Left cardiac atrium (tissue), 4 donors: ENCODE measurements at regions of chr2 and their contacts with region 1.

Region 1: DNA sequence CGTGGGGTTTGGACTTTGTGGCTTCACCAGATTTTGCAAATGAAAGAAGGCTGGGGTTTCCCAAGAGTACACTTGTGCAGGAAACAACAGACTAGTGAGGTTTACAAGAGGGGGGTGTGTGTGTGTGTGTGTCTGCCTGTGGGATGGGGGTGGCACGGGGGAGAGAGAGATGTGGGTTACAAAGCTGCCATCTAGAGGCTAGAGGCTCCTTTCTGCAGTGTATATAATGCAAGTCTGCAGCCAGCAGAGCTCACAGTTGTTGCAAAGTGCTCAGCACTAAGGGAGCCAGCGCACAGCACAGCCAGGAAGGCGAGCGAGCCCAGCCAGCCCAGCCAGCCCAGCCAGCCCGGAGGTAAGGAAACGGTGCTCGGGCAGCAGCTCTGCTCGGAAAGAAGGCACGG is at the start of gene ACKR3:
- DNase-seq: peak; percentile 80
- ATAC-seq: peak; percentile 68 to 79
- total RNA-seq, gene ACKR3: 27.4 to 46.4 TPM

Region 2: DNA sequence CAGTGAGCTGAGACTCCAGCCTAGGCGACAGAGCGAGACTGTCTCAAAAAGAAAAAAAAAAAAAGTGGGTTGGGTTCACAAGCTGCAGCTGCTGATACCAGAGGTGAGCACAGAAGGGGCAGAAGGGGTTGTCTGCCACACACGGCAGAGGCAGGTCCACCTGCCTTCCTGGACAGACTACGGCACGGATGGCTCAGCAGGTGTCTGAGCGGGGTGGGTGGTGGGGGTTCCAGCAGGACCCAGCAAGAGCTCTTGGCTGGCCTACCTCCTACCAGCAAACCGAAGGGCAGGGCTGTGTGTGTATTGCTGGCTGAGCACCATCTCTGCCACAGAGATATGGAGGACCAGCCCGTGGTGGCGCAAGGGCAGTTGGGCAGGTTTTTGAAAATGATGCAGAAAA is 175.0 kb before region 1 on chr2:
- intact Hi-C with region 1: no loop called
- DNase-seq: no peak
- ATAC-seq: no peak

Region 3: DNA sequence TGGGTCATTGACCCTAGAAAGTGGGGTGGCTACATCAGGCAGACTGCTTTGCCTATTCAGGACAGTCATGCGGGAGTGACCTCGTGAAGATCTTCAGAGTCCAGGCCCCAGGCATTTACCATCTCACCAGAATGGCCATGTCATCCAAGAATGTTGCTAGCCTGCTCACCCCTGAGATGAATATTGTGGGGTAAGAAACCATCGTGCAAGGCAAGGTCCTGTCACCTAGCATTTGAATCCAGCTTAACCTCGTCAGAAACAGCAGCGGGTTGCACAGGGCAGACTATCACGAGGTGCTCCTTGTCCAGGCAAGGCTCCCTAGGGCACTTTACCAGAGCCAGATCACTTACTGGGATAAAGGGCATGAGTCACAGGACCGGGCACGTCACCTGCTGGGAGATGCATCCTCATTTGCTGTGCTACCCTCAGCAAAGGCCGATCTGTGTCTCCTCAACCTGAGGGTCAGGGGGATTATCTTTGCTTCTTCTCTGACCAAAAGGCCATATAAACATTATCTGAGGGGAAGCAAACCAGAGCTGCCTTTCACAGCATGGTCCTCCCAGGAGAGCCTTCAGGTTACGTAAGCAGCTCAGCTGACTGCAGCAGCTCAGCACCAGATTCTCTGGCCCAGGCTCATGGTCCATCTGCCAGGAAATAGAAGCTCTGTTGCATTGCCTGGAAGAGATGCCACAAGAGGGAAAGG is 162.5 kb after region 1 on chr2:
- intact Hi-C with region 1: loop called in 1 of 2 experiments (anchors 10 kb)
- DNase-seq: peak; percentile 83
- ATAC-seq: peak; percentile 93 to 94